Activated CD4-positive, alpha-beta memory T cell treated with anti-CD3 and anti-CD28 coated beads for 36 hours (primary cell): ENCODE measurements at regions of chr15 and their contacts with region 1.

Region 1: GRCh38 chr15:64046347-64047153 is at the start of gene DAPK2:
- DNase-seq: peak; percentile 75
- H3K4me3 Mint-ChIP-seq: peak within 1 kb of the TSS; percentile 53
- H3K27ac Mint-ChIP-seq: no peak within 1 kb of the TSS
- H3K4me1 Mint-ChIP-seq: peaks cover 4% of the 10 kb centered on the region
- H3K27me3 Mint-ChIP-seq: peaks cover 17% of the 10 kb centered on the region
- total RNA-seq, gene DAPK2: 0.81 to 0.87 TPM

Region 2: DNA sequence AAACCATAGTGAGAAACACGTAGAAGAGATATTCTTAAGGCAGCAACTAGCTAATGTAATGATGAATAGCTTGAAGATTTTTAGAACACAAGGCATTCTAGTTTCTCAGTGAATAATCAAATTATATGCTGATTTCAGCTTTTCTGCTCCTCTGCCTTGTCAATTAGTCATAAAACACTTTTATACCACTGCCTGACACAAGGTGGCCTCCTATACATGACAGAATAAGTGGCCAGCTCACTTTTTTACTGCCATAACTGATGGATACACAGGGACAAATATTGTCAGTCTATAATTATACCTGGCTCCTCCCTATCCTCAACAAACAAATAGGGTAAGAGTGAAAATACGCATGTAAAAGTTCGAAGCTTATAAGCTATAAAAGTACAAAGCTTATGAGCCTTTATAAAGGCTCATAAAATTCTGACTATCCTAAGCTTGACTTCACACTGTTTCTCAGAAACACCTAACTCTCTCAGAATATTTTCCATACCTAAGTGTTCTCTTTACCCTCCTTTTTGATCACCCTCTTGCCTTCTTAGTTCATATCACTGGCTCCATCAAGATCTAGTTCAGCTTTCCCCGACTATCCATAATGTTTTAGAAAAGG is 294.4 kb before region 1 on chr15:
- CTCF ChIA-PET with region 1: interaction called, 89 read pairs
- POLR2A ChIA-PET with region 1: no interaction called
- intact Hi-C with region 1: loop called (anchors 5 kb)
- DNase-seq: peak; percentile 14
- H3K4me3 Mint-ChIP-seq: no peak overlapping the region
- H3K27ac Mint-ChIP-seq: no peak overlapping the region
- H3K4me1 Mint-ChIP-seq: peaks cover 2% of the 10 kb centered on the region
- H3K27me3 Mint-ChIP-seq: no peaks in the 10 kb centered on the region

Region 3: GRCh38 chr15:63833021-63833696 is 213.4 kb before region 1 on chr15:
- CTCF ChIA-PET with region 1: interaction called, 6 read pairs
- POLR2A ChIA-PET with region 1: no interaction called
- intact Hi-C with region 1: loop called (anchors 10 kb)
- DNase-seq: peak; percentile 46
- H3K4me3 Mint-ChIP-seq: peak overlapping the region; percentile 96
- H3K27ac Mint-ChIP-seq: peak overlapping the region; percentile 66
- H3K4me1 Mint-ChIP-seq: peaks cover 44% of the 10 kb centered on the region
- H3K27me3 Mint-ChIP-seq: no peaks in the 10 kb centered on the region

Region 4: DNA sequence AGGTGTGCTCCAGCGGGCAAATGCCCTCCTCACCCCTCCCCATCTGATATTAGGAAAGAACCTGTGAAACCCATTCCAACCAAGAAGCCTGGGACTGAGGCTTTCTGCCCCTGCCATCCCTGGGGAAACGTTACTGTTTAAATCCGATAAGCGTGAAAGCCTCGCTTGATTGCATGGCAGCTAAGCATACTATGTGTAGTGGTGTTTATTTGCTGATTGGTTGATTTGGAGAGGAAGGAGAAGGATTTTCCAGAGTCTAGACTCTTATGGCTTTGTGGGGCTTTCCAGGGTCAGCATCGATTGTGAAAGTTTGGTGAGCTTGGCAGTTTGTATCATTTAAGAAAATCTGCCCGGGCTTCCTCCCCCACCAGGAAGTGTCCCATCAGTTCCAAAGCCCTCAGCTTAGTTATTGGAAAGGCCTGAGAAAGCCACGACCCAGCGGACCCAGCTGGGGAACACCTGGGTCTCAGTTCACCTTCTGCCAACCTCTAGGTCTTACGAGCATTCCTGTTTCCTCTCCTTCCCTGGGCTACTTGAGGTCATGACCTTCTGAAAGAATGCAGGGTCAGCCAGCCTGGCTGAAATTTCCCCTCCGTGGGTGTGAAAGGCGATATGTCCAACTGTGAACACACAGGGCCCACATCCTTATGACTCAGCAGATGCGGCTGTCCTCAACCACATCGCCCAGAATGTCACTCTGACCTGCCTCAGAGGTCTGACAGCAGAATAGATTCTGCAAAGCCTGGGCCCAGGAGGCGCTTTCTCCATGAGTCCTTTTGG is 150.0 kb before region 1 on chr15:
- CTCF ChIA-PET with region 1: interaction called, 11 read pairs
- POLR2A ChIA-PET with region 1: no interaction called
- intact Hi-C with region 1: loop called (anchors 5 kb)
- DNase-seq: peak; percentile 63
- H3K4me3 Mint-ChIP-seq: no peak overlapping the region
- H3K27ac Mint-ChIP-seq: peak overlapping the region; percentile 7
- H3K4me1 Mint-ChIP-seq: peaks cover 42% of the 10 kb centered on the region
- H3K27me3 Mint-ChIP-seq: no peaks in the 10 kb centered on the region

Region 5: DNA sequence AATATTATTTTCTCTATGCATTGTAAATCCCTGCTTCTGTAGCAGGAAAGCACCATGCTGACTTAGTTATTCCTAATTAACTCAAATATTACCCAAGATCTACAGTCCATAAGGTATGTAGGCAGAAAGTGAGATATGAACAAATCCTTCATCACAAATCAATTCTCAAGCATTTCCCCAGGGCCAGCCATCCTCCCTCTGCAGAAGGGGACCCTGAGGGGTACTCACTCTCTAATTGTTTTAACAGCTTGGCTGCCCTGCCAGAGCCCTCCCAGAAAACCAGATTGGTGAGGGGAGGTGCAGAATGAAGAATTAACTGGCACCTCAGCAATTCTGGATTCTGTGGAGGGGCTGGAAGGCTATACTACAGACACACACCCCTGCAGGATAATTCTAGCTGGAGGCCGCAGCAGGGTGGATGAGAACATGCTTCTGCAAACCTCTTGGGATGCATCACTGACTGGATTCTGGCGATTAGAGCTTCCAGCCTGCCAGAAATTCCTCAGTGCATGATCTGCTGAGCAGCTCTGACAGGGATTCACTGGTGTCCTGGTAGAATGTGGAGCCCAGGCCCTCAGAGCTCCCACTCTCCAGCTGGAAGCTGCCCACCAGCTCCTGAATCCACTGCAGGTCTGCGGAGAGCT is 124.2 kb before region 1 on chr15:
- CTCF ChIA-PET with region 1: interaction called, 14 read pairs
- POLR2A ChIA-PET with region 1: no interaction called
- intact Hi-C with region 1: no loop called
- DNase-seq: no peak
- H3K4me3 Mint-ChIP-seq: no peak overlapping the region
- H3K27ac Mint-ChIP-seq: no peak overlapping the region
- H3K4me1 Mint-ChIP-seq: peaks cover 14% of the 10 kb centered on the region
- H3K27me3 Mint-ChIP-seq: no peaks in the 10 kb centered on the region

Region 6: GRCh38 chr15:63945007-63945788 is 101.4 kb before region 1 on chr15:
- CTCF ChIA-PET with region 1: interaction called, 160 read pairs
- POLR2A ChIA-PET with region 1: interaction called, 6 read pairs
- intact Hi-C with region 1: loop called (anchors 5 kb)
- DNase-seq: peak; percentile 82
- H3K4me3 Mint-ChIP-seq: no peak overlapping the region
- H3K27ac Mint-ChIP-seq: no peak overlapping the region
- H3K4me1 Mint-ChIP-seq: peaks cover 7% of the 10 kb centered on the region
- H3K27me3 Mint-ChIP-seq: no peaks in the 10 kb centered on the region

Region 7: DNA sequence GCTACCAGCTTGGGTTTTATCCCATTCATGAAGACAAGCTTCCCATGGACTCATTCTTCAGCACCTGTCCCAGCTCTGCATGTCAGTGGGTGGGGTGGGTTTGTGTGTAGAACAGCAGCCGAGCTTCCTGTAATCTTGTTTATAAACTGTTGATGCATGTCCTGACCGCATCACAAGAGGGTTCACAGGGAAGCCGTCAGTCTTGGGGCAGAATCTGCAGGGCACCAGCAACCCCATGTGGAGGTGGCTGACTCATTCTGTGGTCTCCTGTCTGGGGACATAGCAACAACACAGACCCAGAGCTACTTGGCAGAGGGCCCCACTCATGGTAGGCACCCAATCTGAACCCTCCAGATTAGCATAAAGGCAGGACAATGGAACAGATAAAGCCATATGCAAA is 35.8 kb before region 1 on chr15:
- CTCF ChIA-PET with region 1: interaction called, 37 read pairs
- POLR2A ChIA-PET with region 1: interaction called, 4 read pairs
- intact Hi-C with region 1: loop called (anchors 1 kb)
- DNase-seq: peak; percentile 92
- H3K4me3 Mint-ChIP-seq: peak overlapping the region; percentile 5
- H3K27ac Mint-ChIP-seq: peak overlapping the region; percentile 83
- H3K4me1 Mint-ChIP-seq: peaks cover 42% of the 10 kb centered on the region
- H3K27me3 Mint-ChIP-seq: no peaks in the 10 kb centered on the region